ENCODE measurements at regions of chr16 and their contacts with region 1.

Region 1: GRCh38 chr16:29961479-29962343 is at the start of gene TMEM219:
- DNase-seq: peak; percentile 81 to 97 (median 91)
- ATAC-seq: peak; percentile 85 to 95 (median 88)
- H3K4me3 ChIP-seq: peak within 1 kb of the TSS; percentile 69 to 87
- H3K4me3 Mint-ChIP-seq: peak within 1 kb of the TSS; percentile 87 to 90 (median 88)
- H3K27ac ChIP-seq: peak within 1 kb of the TSS; percentile 90
- H3K27ac Mint-ChIP-seq: peak within 1 kb of the TSS; percentile 92 to 95
- H3K4me1 ChIP-seq: peaks cover 10 to 25% of the 10 kb centered on the region in 2 experiments
- H3K4me1 Mint-ChIP-seq: peaks cover 19 to 30% (median 24%) of the 10 kb centered on the region in 3 donors
- H3K27me3 ChIP-seq: no peaks in the 10 kb centered on the region
- H3K27me3 Mint-ChIP-seq: no peaks in the 10 kb centered on the region
- total RNA-seq, gene TMEM219: 66.7 to 93.9 (median 80.4) TPM

Region 2: GRCh38 chr16:29926005-29926710 is 35.6 kb before region 1 on chr16 and contains the start of gene KCTD13:
- CTCF ChIA-PET with region 1: interaction called in 1 of 2 experiments, 10 read pairs
- POLR2A ChIA-PET with region 1: interaction called in 1 of 2 experiments, 3 read pairs
- DNase-seq: peak; percentile 59 to 98 (median 82)
- ATAC-seq: peak; percentile 91 to 92 (median 92)
- H3K4me3 ChIP-seq: peak within 1 kb of the TSS; percentile 87 to 88
- H3K4me3 Mint-ChIP-seq: peak within 1 kb of the TSS; percentile 87 to 91 (median 90)
- H3K27ac ChIP-seq: peak within 1 kb of the TSS; percentile 85
- H3K27ac Mint-ChIP-seq: peak within 1 kb of the TSS; percentile 94 to 97
- H3K4me1 ChIP-seq: peaks cover 15 to 28% of the 10 kb centered on the region in 2 experiments
- H3K4me1 Mint-ChIP-seq: peaks cover 36 to 45% (median 40%) of the 10 kb centered on the region in 3 donors
- H3K27me3 ChIP-seq: no peaks in the 10 kb centered on the region
- H3K27me3 Mint-ChIP-seq: no peaks in the 10 kb centered on the region
- total RNA-seq, gene KCTD13: 48.4 to 87.3 (median 79.1) TPM

Region 3: DNA sequence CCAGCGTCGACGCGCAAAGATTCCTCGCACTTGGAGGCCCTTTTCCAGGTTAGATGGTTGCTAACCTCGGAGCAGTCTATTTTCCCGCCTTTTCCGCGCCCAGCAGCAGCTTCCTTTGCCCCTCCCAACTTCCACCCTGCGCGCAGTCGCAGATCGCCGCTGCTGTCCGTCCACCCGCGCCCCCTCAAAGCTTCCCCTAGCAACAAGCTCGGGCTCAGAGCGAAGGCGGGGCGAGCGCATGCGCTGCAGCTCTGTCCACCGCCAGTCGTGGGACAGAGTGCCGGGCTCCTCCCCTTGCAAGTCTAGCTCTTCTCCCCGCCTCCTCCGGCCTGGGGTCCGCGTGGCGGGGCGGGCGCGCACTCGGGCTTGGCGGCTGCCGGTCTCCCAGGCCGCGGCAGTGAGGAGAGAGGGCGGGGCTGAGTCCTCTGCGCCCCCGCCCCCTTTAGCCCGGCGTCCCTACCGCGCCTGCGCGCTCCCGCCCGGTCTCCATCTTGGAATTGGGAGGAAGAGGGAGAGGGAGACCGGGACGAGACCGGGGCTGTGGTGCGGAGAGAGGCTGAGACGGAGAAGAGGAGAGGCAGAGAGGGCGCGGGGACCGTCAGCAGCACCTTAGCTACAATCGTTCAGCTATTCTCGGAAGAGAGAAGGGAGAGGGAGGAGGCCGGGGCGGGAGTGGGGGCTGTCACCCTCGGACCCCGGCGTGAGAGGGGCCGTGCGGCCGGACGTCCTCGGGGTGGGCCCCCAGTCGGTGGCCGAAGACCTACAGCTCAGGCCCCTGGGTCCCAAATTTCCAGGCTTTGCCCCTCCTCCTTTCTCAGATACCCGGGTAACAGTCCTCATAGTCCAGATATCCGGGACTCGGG is 11.9 kb after region 1 on chr16 and contains the start of gene TAOK2:
- CTCF ChIA-PET with region 1: interaction called in 1 of 2 experiments, 22 read pairs
- POLR2A ChIA-PET with region 1: interaction called, 5 to 7 read pairs
- DNase-seq: peak; percentile 70 to 95 (median 83)
- ATAC-seq: peak; percentile 91 to 97 (median 96)
- H3K4me3 ChIP-seq: peak within 1 kb of the TSS; percentile 83 to 98
- H3K4me3 Mint-ChIP-seq: peak within 1 kb of the TSS; percentile 85 to 97 (median 90)
- H3K27ac ChIP-seq: peak within 1 kb of the TSS; percentile 78
- H3K27ac Mint-ChIP-seq: peak within 1 kb of the TSS; percentile 89 to 93
- H3K4me1 ChIP-seq: peaks cover 13 to 33% of the 10 kb centered on the region in 2 experiments
- H3K4me1 Mint-ChIP-seq: peaks cover 23 to 41% (median 36%) of the 10 kb centered on the region in 3 donors
- H3K27me3 ChIP-seq: no peaks in the 10 kb centered on the region
- H3K27me3 Mint-ChIP-seq: no peaks in the 10 kb centered on the region
- total RNA-seq, gene TAOK2: 26.1 to 58.3 (median 55.9) TPM

Region 4: DNA sequence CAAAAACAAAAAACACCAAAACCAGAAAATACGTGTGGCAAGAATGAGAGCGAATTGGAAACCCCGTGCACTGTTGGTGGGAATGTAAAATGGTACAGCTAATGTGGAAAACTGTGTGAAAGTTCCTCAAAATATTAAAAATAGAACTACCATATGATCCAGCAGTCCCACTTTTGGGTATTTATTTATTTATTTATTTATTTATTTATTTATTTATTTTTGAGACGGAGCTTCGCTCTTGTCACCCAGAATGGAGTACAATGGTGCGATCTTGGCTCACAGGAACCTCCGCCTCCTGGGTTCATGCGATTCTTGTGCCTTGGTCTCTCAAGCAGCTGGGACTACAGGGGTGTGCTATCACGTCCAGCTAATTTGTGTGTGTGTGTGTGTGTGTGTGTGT is 190.8 kb after region 1 on chr16:
- CTCF ChIA-PET with region 1: no interaction called
- POLR2A ChIA-PET with region 1: no interaction called
- DNase-seq: no peak
- ATAC-seq: no peak
- H3K4me3 ChIP-seq: no peak overlapping the region
- H3K4me3 Mint-ChIP-seq: no peak overlapping the region
- H3K27ac ChIP-seq: no peak overlapping the region
- H3K27ac Mint-ChIP-seq: no peak overlapping the region
- H3K4me1 ChIP-seq: no peaks in the 10 kb centered on the region
- H3K4me1 Mint-ChIP-seq: no peaks in the 10 kb centered on the region
- H3K27me3 ChIP-seq: no peaks in the 10 kb centered on the region
- H3K27me3 Mint-ChIP-seq: no peaks in the 10 kb centered on the region